ENCODE measurements at regions of chr5 and their contacts with region 1.

Region 1: DNA sequence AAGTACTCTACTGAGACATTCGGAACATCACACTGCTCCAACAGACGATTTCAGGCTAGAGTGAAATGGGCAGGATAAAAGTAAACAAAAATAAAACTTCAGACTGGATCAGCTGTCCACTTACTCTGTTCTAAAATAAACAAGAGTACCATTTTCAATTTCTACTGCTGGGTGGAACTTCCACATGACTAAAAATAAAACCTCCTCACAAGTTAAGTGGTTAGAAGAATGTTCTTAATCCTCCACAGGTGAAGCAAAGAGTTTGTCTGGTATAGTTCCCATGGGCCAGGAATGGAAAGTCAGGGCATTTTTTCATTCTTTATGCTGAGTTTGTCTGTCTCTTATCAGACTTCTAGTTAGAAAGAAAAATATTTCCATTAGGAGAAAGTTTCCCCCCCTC is 15.7 kb downstream of the NUDT12 start:
- DNase-seq: no peak
- H3K4me3 ChIP-seq: no peak overlapping the region
- H3K27ac ChIP-seq: no peak overlapping the region
- H3K4me1 ChIP-seq: no peaks in the 10 kb centered on the region
- H3K27me3 ChIP-seq: no peaks in the 10 kb centered on the region
- CTCF ChIP-seq: no peak

Region 2: DNA sequence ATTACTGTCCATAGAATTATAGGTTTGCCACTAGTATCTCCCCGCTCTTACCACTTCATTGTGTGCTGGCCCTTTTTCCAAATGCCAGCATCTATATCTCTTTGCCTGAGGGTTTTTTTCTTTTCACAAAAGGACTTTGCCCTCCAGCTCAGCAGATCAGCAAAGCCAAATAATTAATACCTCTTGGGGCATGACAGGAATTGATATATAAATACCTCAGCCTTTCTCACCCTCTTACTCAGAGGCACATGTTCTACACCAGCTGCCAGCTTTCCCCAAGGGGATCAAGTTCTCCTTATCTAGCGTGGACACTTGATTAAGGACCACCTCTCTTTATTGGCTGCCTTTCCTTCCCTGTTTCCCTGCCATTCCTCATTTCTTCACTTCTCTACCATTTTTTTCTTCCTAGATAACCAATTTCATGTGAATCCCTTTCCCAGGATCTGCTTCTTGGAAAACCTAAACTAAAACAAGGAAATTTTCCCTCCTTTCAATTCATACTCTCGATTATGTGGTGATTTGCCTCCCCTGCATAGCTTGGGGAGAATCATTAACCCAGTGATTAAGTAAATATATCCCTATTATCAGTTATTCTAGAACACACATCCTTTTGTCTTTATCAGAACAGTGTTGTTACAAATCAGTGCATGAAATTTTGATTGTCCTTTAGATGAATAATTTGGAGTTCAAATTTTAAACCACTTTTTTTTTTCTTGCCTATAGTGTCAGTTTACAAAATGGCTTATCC is 22.6 kb after region 1 on chr5:
- intact Hi-C with region 1: loop called (anchors 2 kb)
- DNase-seq: no peak
- H3K4me3 ChIP-seq: no peak overlapping the region
- H3K27ac ChIP-seq: no peak overlapping the region
- H3K4me1 ChIP-seq: no peaks in the 10 kb centered on the region
- H3K27me3 ChIP-seq: no peaks in the 10 kb centered on the region
- CTCF ChIP-seq: no peak

Region 3: DNA sequence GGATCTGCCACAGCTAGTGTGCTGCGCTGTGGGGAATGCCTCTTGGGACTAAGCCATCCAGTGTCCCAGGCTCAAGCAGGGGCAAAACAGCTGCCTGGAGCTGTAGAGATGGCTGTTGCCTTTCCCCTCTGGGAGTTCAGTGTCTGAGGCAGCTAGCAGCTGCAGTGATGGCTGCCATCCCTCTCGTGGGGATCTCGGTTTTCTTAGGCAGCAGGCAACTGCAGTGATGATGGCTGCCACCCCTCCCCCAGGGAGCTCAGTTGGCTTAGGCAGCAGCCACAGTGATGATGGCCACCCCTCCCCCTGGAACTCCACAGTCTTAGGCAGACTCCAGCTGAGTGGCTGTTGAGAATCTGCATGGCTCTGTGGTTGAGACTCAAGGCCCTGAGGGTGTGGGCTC is 1405.0 kb after region 1 on chr5:
- intact Hi-C with region 1: no loop called
- DNase-seq: no peak
- H3K4me3 ChIP-seq: no peak overlapping the region
- H3K27ac ChIP-seq: no peak overlapping the region
- H3K4me1 ChIP-seq: no peaks in the 10 kb centered on the region
- H3K27me3 ChIP-seq: no peaks in the 10 kb centered on the region
- CTCF ChIP-seq: no peak

Measured in tibial artery (tissue), 4 donors.